ENCODE measurements at regions of chr17 and their contacts with region 1.

Region 1: DNA sequence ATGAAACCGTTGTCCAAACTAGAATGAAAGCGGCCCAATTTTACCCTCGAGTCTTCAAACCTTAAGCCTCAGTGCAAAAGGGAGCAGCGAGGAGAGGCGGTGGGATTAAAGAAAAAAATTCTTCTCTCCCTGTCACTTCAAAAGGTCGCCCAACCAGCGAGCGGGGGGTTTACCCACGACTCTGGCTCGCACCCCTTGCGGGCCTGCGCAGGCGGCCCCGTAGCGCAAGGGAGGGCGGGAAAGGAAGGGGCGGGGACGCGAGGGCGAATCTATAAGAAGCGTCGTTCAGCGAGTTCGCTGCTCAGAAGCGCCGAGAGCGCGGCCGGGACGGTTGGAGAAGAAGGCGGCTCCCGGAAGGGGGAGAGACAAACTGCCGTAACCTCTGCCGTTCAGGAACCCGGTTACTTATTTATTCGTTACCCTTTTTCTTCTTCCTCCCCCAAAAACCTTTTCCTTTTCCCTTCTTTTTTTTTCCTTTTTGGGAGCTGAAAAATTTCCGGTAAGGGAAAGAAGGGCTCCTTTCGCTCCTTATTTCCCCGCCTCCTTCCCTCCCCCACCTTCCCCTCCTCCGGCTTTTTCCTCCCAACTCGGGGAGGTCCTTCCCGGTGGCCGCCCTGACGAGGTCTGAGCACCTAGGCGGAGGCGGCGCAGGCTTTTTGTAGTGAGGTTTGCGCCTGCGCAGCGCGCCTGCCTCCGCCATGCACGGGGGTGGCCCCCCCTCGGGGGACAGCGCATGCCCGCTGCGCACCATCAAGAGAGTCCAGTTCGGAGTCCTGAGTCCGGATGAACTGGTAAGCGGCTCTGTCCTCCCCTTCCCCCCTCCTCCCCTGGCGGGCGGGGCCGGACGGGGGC is at the start of gene POLR2A:
- DNase-seq: peak; percentile 96 to 99 (median 98)
- ATAC-seq: peak; percentile 59 to 67
- H3K4me3 Mint-ChIP-seq: peak within 1 kb of the TSS; percentile 95 to 100 (median 99)
- H3K27ac Mint-ChIP-seq: peak within 1 kb of the TSS; percentile 97 to 100 (median 100)
- H3K4me1 Mint-ChIP-seq: peaks cover 46 to 80% (median 75%) of the 10 kb centered on the region in 4 donors
- H3K27me3 Mint-ChIP-seq: no peaks in the 10 kb centered on the region
- polyA plus RNA-seq, gene POLR2A: 31.1 to 68.0 (median 47.3) TPM

Region 2: GRCh38 chr17:7156342-7156940 is 327.9 kb before region 1 on chr17:
- POLR2A ChIA-PET with region 1: no interaction called
- DNase-seq: no peak
- ATAC-seq: no peak
- H3K4me3 Mint-ChIP-seq: no peak overlapping the region
- H3K27ac Mint-ChIP-seq: peak overlapping the region in 1 of 10 donors; percentile 34
- H3K4me1 Mint-ChIP-seq: no peaks in the 10 kb centered on the region
- H3K27me3 Mint-ChIP-seq: peaks cover 0 to 19% (median 8%) of the 10 kb centered on the region in 5 donors

Region 3: DNA sequence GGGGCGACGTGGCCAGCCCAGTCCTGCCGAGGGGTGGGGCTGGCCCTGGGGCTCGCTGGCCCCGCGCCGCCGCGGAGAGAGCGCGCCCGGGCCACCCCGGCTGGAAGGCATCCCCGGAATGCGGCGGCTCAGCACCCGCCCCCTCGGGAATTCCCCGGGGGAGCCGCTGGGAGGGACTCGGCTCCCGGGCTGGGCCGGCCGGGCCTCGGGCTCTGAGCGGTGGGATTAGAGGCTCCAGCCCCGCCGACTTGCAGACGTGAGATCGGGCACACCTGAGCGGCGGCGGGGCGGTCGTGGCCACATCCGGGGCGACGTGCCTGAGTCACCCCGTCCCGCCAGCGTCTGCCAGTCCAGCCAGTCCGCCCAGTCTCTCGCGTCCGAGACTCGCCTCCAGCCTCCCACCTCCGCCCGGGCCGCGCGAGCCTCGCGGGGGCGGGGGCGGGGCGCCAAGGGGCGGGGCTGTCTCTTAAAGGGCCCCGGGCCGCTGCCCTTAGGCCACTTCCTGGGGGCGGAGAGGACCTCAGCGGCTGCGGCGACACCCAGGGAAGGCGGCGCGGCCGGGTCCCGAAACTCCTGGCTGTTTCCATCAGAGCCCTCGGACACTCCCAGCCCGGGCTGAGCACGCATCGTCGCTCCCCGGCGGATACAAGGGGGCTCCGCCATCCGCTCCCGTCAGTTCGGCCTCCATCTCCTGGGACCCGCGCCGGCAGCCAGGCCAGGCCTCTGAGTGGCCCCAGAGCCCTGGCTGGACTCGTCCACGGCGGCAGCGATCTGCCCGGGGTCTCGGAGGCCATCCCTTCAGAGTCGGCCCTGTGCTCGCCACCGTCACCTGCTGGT is 132.4 kb before region 1 on chr17 and contains the start of gene KCTD11:
- POLR2A ChIA-PET with region 1: interaction called, 10 read pairs
- DNase-seq: peak; percentile 51 to 81 (median 62)
- ATAC-seq: peak; percentile 38 to 51
- H3K4me3 Mint-ChIP-seq: peak within 1 kb of the TSS; percentile 74 to 92 (median 86)
- H3K27ac Mint-ChIP-seq: peak within 1 kb of the TSS; percentile 78 to 91 (median 86)
- H3K4me1 Mint-ChIP-seq: peaks cover 19 to 82% (median 55%) of the 10 kb centered on the region in 4 donors
- H3K27me3 Mint-ChIP-seq: no peaks in the 10 kb centered on the region
- polyA plus RNA-seq, gene KCTD11: 1.2 to 1.6 (median 1.3) TPM

Region 4: DNA sequence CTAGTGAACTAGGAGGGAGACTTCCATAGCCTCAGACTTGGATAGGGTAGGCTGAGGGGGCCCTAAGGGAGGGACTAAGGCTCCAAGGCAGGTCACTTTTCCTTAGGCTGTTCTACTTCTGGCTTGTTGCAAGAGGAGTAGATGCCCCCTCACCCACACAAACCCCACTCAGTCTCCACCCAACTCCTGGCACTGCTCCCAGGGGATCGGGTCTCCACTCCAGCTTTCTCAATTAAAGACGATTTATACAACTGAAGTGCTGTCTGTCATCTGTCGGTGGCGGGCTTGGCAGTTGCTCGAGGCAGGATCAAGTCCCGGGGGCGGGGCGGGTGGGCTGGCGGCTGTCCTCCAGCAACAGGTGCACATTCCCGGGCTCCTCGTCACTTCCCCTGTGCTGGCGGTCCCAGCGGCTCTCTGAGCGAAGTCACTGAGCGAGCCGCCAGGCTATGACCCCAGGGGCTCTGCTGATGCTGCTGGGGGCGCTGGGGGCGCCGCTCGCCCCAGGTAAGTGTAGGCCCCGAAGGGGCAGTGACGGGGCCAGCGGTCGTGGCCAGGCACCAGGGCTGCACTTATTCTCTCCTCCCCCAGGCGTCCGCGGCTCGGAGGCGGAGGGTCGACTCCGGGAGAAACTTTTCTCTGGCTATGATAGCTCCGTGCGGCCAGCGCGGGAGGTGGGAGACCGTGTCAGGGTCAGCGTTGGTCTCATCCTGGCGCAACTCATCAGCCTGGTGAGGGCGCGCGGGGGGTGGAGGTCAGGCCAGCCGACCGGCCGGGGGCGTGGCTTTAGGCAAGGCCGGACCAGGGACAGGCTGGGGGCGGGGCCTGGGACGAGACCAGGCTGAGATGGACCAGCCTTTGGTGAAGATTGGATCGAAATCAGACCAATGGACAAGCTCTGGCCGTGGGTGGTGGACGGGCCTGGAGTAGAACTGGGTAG is 39.3 kb before region 1 on chr17 and contains the start of gene CHRNB1:
- POLR2A ChIA-PET with region 1: interaction called, 74 read pairs
- DNase-seq: peak in 2 of 10 donors; percentile 23 to 24
- ATAC-seq: peak; percentile 32 to 38
- H3K4me3 Mint-ChIP-seq: peak within 1 kb of the TSS; percentile 75 to 94 (median 86)
- H3K27ac Mint-ChIP-seq: peak within 1 kb of the TSS in 8 of 10 donors; percentile 7 to 91 (median 62)
- H3K4me1 Mint-ChIP-seq: peaks cover 19 to 33% (median 28%) of the 10 kb centered on the region in 4 donors
- H3K27me3 Mint-ChIP-seq: peaks cover 17 to 71% (median 40%) of the 10 kb centered on the region in 5 donors
- polyA plus RNA-seq, gene CHRNB1: 18.1 to 24.5 (median 24.3) TPM

Region 5: GRCh38 chr17:7496470-7497183 is 12.3 kb after region 1 on chr17:
- POLR2A ChIA-PET with region 1: interaction called, 15 read pairs
- DNase-seq: no peak
- ATAC-seq: no peak
- H3K4me3 Mint-ChIP-seq: peak overlapping the region in 2 of 10 donors; percentile 10 to 39
- H3K27ac Mint-ChIP-seq: peak overlapping the region in 3 of 10 donors; percentile 44 to 70 (median 65)
- H3K4me1 Mint-ChIP-seq: peaks cover 21 to 33% (median 26%) of the 10 kb centered on the region in 4 donors
- H3K27me3 Mint-ChIP-seq: no peaks in the 10 kb centered on the region

Region 6: GRCh38 chr17:7572588-7573323 is 88.5 kb after region 1 on chr17:
- POLR2A ChIA-PET with region 1: interaction called, 22 read pairs
- DNase-seq: peak; percentile 97 to 100 (median 100)
- ATAC-seq: peak; percentile 12 to 85
- H3K4me3 Mint-ChIP-seq: peak overlapping the region; percentile 91 to 100 (median 98)
- H3K27ac Mint-ChIP-seq: peak overlapping the region; percentile 95 to 100 (median 99)
- H3K4me1 Mint-ChIP-seq: peaks cover 19 to 51% (median 44%) of the 10 kb centered on the region in 4 donors
- H3K27me3 Mint-ChIP-seq: no peaks in the 10 kb centered on the region

Measured in naive thymus-derived CD8-positive, alpha-beta T cell (primary cell).